ENCODE measurements at regions of chr6 and their contacts with region 1.

Region 1: GRCh38 chr6:80338201-80338836 is 231.8 kb downstream of the BCKDHB start:
- DNase-seq: peak; percentile 32
- H3K4me3 Mint-ChIP-seq: no peak overlapping the region
- H3K27ac Mint-ChIP-seq: no peak overlapping the region
- H3K4me1 Mint-ChIP-seq: no peaks in the 10 kb centered on the region
- H3K27me3 Mint-ChIP-seq: no peaks in the 10 kb centered on the region

Region 2: DNA sequence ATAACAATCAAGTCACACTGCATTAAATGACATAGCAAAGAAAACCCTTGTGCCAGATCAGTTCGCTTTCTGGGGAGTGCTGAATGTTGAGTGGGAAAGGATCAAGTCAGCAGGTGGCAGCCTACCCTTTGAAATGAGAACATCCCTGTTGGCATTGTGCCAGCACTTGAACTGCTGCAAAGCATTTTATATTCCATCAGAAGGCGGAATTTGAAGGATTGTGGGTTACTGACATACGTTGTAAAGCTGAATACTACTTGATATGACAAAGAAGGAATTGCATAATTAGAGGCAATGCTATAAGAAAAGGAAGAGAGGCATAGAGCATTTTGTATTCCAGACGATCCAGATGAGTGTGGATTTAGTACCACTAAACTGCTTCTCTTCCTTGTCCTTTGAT is 205.3 kb before region 1 on chr6:
- intact Hi-C with region 1: loop called (anchors 10 kb)
- DNase-seq: no peak
- H3K4me3 Mint-ChIP-seq: no peak overlapping the region
- H3K27ac Mint-ChIP-seq: no peak overlapping the region
- H3K4me1 Mint-ChIP-seq: no peaks in the 10 kb centered on the region
- H3K27me3 Mint-ChIP-seq: no peaks in the 10 kb centered on the region

Region 3: DNA sequence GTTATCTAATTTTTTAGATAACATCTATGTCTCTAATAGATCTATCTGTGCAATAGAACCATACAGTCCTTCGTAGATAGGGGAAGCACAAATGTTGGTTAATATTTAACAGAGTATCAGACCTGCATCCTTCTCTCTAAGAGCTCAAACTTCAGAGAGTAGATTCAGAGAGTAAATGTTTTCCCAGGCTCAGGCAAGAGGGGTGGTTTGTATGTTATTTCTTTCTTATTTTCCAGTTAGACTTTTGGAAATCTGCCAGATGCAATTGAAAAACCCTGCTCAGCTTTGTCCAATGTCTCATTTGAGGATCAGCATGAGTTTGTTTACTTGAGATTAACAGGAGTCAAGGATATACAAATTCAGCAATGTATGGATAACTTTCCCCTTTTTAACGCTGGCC is 130.1 kb after region 1 on chr6:
- intact Hi-C with region 1: no loop called
- DNase-seq: no peak
- H3K4me3 Mint-ChIP-seq: no peak overlapping the region
- H3K27ac Mint-ChIP-seq: no peak overlapping the region
- H3K4me1 Mint-ChIP-seq: no peaks in the 10 kb centered on the region
- H3K27me3 Mint-ChIP-seq: peaks cover 2% of the 10 kb centered on the region

Region 4: DNA sequence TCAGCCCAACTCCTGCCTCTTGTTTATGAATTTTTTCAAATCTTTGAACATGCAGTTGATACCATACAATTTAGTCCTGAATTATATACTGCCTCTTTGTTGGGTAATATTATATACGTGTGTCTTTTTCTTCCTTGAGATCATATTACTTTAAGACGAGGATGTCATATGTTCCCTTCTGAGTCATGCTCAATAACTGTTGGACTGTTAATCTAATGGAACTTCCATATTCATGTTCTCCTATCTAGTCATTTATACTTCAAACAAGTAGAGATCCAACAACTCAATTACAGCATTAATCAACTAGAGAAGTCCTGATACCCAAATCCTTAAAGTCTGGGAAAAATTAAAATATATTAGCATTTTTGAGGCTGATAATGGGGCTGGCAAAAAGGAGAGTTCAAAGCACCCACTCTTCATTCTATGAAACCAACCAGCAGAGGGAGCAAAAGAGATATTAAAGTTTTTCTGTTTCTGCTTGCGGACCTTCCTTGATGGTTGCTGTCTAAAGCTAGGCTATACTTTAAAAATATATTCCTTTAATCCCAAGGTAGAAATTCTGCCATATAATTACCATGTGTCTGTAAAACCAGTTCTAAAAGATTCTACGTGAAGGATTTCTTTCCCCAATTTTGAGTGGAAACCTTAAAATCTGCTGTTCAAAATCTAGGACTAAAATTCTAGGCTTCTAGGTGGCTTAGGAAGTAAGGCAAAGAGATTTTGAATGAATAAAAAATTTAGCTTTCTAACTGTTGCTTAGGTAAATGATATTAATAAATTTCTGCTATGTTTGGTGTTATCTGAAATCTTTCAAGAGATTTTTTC is 267.1 kb after region 1 on chr6:
- intact Hi-C with region 1: loop called (anchors 5 kb)
- DNase-seq: no peak
- H3K4me3 Mint-ChIP-seq: no peak overlapping the region
- H3K27ac Mint-ChIP-seq: no peak overlapping the region
- H3K4me1 Mint-ChIP-seq: no peaks in the 10 kb centered on the region
- H3K27me3 Mint-ChIP-seq: peaks cover 6% of the 10 kb centered on the region

Region 5: DNA sequence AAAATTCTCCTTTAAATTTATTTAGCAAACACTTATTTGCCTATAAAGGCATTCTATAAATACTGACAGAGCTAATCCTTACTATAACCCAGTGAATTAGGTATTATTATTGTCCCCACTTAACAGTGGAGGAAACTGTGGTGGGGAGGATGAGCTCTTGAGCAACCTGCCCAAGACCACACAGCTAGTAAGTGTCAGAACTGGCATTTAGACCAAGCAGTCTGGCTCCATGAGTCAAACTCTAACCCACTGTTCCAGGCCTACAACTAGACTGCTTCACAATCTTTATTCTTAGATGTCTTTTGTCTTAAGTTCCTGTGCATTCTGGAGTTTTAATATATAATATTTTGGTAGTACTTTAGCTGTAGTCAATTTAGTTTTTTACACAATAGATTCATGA is 299.0 kb after region 1 on chr6:
- intact Hi-C with region 1: no loop called
- DNase-seq: no peak
- H3K4me3 Mint-ChIP-seq: no peak overlapping the region
- H3K27ac Mint-ChIP-seq: no peak overlapping the region
- H3K4me1 Mint-ChIP-seq: no peaks in the 10 kb centered on the region
- H3K27me3 Mint-ChIP-seq: no peaks in the 10 kb centered on the region